Left cardiac atrium (tissue), 4 donors: ENCODE measurements at regions of chr11 and their contacts with region 1.

Region 1: GRCh38 chr11:65873318-65874156 is 937 bp upstream of the EFEMP2 start:
- DNase-seq: peak; percentile 96
- ATAC-seq: peak; percentile 95

Region 2: GRCh38 chr11:65860278-65861164 is 13.0 kb before region 1 on chr11 and contains the start of gene MUS81:
- intact Hi-C with region 1: loop called in 1 of 2 experiments (anchors 1 kb)
- DNase-seq: peak; percentile 98
- ATAC-seq: peak; percentile 67 to 72
- total RNA-seq, gene MUS81: 36.1 to 37.6 TPM

Region 3: GRCh38 chr11:66051766-66052663 is 178.5 kb after region 1 on chr11 and contains the start of gene SF3B2:
- intact Hi-C with region 1: no loop called
- DNase-seq: peak; percentile 99
- ATAC-seq: peak; percentile 96 to 98
- total RNA-seq, gene SF3B2: 78.7 to 101 TPM